Activated CD4-positive, alpha-beta T cell treated with anti-CD3 and anti-CD28 coated beads, Interleukin-2, amount 10 ng/mL, durations not matched to agents 24 days and 14 days (primary cell): ENCODE measurements at regions of chr9 and their contacts with region 1.

Region 1: GRCh38 chr9:20865347-20865746 is 166.1 kb downstream of the HACD4 start:
- DNase-seq: no peak
- H3K4me3 Mint-ChIP-seq: no peak overlapping the region
- H3K27ac Mint-ChIP-seq: no peak overlapping the region
- H3K4me1 Mint-ChIP-seq: peaks cover 6% of the 10 kb centered on the region
- H3K27me3 Mint-ChIP-seq: no peaks in the 10 kb centered on the region

Region 2: GRCh38 chr9:20805766-20806165 is 59.6 kb before region 1 on chr9:
- intact Hi-C with region 1: loop called (anchors 10 kb)
- DNase-seq: no peak
- H3K4me3 Mint-ChIP-seq: no peak overlapping the region
- H3K27ac Mint-ChIP-seq: no peak overlapping the region
- H3K4me1 Mint-ChIP-seq: no peaks in the 10 kb centered on the region
- H3K27me3 Mint-ChIP-seq: no peaks in the 10 kb centered on the region